Cardiac septum (tissue), 1 donor: ENCODE measurements at regions of chr9 and their contacts with region 1.

Region 1: GRCh38 chr9:135992486-135993408 is 31.6 kb upstream of the UBAC1 start:
- DNase-seq: peak; percentile 94

Region 2: GRCh38 chr9:135971892-135972291 is 20.9 kb before region 1 on chr9:
- intact Hi-C with region 1: loop called (anchors 2 kb)
- DNase-seq: no peak

Region 3: GRCh38 chr9:136011703-136012521 is 19.2 kb after region 1 on chr9:
- intact Hi-C with region 1: loop called (anchors 2 kb)
- DNase-seq: peak; percentile 93

Region 4: DNA sequence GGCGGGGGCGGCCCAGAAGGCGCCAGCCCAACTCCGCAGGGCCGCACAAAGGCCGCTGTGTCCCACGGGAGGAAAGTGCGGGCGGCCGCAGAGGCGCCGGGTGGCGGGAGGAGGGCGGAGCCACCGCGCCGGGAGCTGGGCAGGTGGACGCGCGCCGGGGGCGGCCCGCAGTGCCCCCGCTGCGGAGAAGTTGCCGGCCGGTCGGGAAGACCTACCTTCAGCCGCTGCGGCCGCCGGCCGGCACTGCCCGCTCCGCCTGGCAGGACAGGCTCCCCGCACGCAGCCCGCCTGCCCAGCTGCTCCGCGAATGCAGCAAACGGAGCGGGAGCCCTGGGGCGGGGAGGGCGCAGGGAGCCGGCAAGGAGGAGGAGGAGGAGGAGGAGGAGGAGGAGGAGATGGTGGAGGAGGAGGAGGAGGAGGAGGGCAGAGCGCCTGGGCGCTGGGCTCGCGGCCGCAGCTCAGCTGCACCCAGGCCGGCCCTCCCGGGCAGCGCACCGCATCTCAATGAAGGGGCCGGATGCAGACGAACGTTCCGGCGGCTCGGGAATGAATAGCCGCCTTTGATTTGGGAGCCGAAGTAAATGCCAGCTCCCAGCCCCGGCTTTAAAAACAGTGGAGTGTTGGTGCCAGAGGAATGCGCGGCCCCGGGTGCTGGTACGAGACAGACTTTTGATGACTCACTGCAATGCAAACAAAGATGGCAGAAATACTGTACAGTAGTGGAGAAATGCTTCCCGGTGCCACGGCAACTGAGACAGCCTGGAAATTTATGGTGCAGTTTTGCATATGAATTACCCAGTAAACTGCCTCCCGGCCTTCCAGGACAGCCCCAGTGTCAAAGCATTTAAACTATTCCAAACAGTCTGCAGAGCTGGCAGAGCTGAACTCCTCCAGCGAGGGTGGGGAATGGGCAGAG is 59.0 kb after region 1 on chr9:
- intact Hi-C with region 1: loop called (anchors 2 kb)
- DNase-seq: peak; percentile 82